Right ventricle myocardium superior (tissue), 1 donor: ENCODE measurements at regions of chr16 and their contacts with region 1.

Region 1: DNA sequence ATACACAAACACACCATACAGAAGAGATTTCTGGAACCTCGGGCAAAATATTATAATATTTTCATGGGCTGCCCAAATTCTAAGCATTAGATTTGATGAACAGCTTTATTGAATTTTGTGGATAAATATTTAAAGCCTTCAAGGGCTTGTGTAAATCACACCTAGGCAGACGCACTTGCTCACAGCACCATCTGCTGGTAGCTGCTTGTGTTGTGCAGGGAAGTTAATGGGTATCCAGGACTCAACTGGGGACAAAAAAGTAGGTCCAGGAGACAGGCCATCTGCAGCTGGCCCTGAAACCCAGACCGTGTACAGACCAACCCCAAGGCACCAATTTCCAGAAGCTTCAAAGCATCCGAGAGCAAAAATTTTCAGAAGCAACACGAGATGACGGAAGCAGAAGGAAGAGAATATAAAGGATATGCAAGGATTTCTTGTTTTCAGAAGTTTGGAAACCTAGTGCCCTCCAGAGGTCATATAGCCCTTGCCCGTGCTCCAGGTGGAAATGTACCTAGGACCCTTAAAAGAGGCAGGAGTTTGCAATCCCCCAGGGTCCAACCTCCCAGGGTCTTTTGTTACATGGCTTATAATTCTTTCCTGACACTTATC is 140.0 kb downstream of the CHD9NB start:
- DNase-seq: peak; percentile 51
- ATAC-seq: peak; percentile 41

Region 2: GRCh38 chr16:52191531-52192134 is 721.0 kb before region 1 on chr16:
- intact Hi-C with region 1: loop called (anchors 5 kb)
- DNase-seq: no peak
- ATAC-seq: no peak